HEK293 (cell line): ENCODE measurements at regions of chr1 and their contacts with region 1.

Region 1: GRCh38 chr1:39609618-39610331 is 29.7 kb downstream of the HEYL start:
- H3K4me3 ChIP-seq: no peak overlapping the region
- H3K27ac ChIP-seq: no peak overlapping the region
- H3K4me1 ChIP-seq: no peaks in the 10 kb centered on the region
- CTCF ChIP-seq: peak; percentile 81; the same call in 1 of the 2 replicates

Region 2: DNA sequence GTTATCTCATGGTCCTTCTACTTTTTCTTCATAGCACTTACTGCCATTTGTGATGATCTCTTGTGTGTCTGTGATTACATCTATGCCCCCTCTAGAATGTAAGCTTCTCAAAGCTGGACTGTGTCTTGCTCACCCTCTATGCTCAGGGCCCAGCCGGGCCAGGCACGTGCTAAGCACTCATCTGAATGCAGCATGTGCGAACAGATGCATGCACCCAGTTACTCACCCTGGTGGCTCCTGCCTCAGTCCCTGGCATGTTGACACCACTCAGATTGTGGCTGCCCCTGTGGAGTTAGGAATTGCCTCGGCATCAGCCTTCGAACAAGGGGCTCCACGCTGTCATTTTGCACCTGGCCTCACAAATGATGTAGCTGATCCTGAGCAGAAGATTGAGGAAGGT is 13.6 kb before region 1 on chr1:
- CTCF ChIA-PET with region 1: interaction called, 20 read pairs
- POLR2A ChIA-PET with region 1: no interaction called
- H3K4me3 ChIP-seq: no peak overlapping the region
- H3K27ac ChIP-seq: no peak overlapping the region
- H3K4me1 ChIP-seq: no peaks in the 10 kb centered on the region
- CTCF ChIP-seq: no peak

Region 3: DNA sequence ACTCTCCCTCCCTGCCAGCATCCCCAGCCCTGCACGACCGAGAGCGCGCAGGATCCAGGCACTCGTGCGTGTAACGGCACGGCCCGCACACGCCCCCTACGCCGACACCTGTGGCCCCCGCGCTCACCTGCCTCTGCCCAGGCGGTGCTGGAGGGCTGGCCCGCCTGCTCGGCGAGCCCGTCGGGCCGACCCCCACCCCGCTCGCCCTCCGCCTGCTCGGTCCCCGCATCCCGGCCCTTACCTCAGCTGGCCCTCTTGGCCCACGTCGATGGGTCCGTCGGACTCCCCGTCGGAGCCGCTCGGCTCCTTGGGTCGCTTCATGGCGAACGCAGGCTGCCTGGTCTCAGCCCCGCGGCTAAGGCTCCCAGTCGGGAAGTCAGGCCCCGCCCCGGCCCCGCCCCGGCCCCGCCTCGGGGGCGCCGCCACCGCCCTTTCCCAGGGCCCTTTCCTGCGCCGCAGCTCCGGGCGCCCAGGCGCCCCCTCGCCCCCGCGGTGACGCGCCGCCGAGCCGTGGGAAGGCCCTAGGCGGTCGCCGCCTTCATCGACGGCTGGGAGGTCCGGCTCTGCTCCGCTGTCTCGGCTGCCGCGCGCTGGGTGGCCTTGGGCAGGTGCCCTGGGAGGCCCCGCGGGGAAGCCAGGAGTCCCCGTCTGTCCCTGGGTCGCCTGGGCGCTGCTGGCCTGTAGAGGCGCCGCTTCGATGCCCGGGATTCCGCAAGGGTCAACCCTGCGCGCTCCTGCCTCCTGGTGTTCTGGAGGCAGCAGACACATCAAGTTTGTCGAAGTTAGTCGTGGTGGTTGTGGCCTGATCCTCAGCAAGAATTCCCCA is 29.7 kb after region 1 on chr1 and contains the start of gene HEYL:
- CTCF ChIA-PET with region 1: interaction called, 14 read pairs
- POLR2A ChIA-PET with region 1: interaction called, 6 read pairs
- H3K4me3 ChIP-seq: peak within 1 kb of the TSS; percentile 53
- H3K27ac ChIP-seq: peak within 1 kb of the TSS; percentile 58; the same call in 1 of the 2 replicates
- H3K4me1 ChIP-seq: no peaks in the 10 kb centered on the region
- CTCF ChIP-seq: peak; percentile 95

Region 4: GRCh38 chr1:39720094-39720999 is 110.6 kb after region 1 on chr1:
- CTCF ChIA-PET with region 1: interaction called, 20 read pairs
- POLR2A ChIA-PET with region 1: no interaction called
- H3K4me3 ChIP-seq: no peak overlapping the region
- H3K27ac ChIP-seq: no peak overlapping the region
- H3K4me1 ChIP-seq: no peaks in the 10 kb centered on the region
- CTCF ChIP-seq: peak; percentile 62

Region 5: DNA sequence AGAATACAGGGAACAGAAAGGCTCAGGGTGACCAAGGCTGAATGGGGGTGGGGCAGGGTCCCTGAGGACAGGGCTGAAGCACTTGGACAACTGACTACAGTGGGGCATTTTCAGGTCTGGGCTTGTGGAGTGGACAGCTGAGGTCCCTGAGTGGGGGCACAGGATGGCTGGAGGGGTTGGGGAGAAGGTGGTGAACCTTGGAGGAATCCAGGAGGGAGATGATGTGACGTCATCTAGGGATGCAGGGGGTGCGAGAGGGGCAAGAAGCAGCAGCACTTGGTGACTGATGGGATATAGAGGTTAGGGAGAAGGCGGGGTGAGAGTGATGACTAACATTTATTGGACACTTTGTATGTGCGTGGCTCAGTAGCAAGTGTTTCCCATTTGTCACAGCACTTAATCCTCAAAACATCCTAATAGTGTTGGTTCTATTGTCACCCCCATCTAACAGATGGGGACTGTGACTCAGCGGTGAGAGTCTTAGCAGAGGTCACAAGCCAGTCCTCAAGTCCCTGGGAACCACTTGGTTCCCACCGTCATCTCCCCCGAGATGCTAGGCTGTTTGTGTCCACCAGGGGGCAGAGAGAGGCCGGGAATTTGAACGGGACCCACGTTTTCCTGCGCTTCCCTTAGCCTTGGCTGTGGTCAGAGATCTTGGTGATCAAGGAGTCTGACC is 206.8 kb after region 1 on chr1:
- CTCF ChIA-PET with region 1: no interaction called
- POLR2A ChIA-PET with region 1: no interaction called
- H3K4me3 ChIP-seq: no peak overlapping the region
- H3K27ac ChIP-seq: no peak overlapping the region
- H3K4me1 ChIP-seq: no peaks in the 10 kb centered on the region
- CTCF ChIP-seq: peak; percentile 76